Breast epithelium (tissue), 4 donors: ENCODE measurements at regions of chr5 and their contacts with region 1.

Region 1: GRCh38 chr5:85278183-85278582 is 893.5 kb upstream of the EDIL3 start:
- DNase-seq: no peak
- H3K4me3 ChIP-seq: no peak overlapping the region
- H3K27ac ChIP-seq: no peak overlapping the region
- H3K4me1 ChIP-seq: no peaks in the 10 kb centered on the region
- H3K27me3 ChIP-seq: no peaks in the 10 kb centered on the region
- CTCF ChIP-seq: no peak
- POLR2A ChIP-seq: no peak

Region 2: DNA sequence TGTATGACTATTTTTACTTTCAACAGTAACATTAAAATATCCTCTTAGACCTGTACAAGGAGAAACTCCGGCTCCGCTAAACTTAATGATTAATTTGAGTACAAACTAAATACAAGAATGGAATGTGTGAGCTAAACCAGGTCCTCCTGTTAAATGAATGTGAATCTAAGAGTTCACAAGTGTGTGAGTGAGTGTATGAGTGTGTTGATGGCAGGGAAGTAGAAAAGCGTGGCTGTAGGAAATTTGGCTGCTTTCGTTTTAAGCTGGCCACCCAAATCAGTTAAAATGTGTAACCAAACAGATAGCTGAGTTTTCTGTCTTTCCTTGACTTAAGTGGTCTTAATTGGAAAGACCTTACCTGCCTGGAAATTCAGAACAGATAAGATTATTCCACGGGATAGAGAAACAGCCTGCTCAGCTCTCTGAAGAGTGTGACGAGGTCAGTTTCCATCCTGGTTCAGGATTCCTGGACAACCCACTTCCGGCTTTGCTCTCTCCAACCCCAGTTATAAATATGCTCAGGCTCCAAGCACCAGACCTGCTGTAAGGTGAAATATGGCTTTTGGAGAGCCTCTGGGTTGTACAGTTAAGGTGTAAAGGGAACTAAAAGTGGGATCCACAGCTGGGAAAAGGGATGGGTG is 15.1 kb after region 1 on chr5:
- intact Hi-C with region 1: loop called (anchors 2 kb)
- DNase-seq: no peak
- H3K4me3 ChIP-seq: peak overlapping the region in 1 of 3 donors; percentile 13
- H3K27ac ChIP-seq: no peak overlapping the region
- H3K4me1 ChIP-seq: no peaks in the 10 kb centered on the region
- H3K27me3 ChIP-seq: no peaks in the 10 kb centered on the region
- CTCF ChIP-seq: no peak
- POLR2A ChIP-seq: no peak

Region 3: GRCh38 chr5:85428426-85428934 is 150.3 kb after region 1 on chr5:
- intact Hi-C with region 1: no loop called
- DNase-seq: no peak
- H3K4me3 ChIP-seq: no peak overlapping the region
- H3K27ac ChIP-seq: no peak overlapping the region
- H3K4me1 ChIP-seq: no peaks in the 10 kb centered on the region
- H3K27me3 ChIP-seq: no peaks in the 10 kb centered on the region
- CTCF ChIP-seq: no peak
- POLR2A ChIP-seq: no peak